GM12878 (cell line): ENCODE measurements at regions of chr3 and their contacts with region 1.

Region 1: GRCh38 chr3:16511681-16512434 is 1.6 kb downstream of the RFTN1 start:
- DNase-seq: peak; percentile 98
- ATAC-seq: peak; percentile 48
- H3K4me3 ChIP-seq: peak overlapping the region; percentile 86
- H3K27ac ChIP-seq: peak overlapping the region; percentile 92
- H3K4me1 ChIP-seq: peaks cover 37% of the 10 kb centered on the region
- H3K27me3 ChIP-seq: no peaks in the 10 kb centered on the region
- CTCF ChIP-seq: peak in 1 of 3 experiments; percentile 0; a peak in 1 of 6 replicates
- EP300 ChIP-seq: peak; percentile 99
- POLR2A ChIP-seq: peak; percentile 64
- RAD21 ChIP-seq: peak; percentile 8; the same call in 1 of the 2 replicates

Region 2: DNA sequence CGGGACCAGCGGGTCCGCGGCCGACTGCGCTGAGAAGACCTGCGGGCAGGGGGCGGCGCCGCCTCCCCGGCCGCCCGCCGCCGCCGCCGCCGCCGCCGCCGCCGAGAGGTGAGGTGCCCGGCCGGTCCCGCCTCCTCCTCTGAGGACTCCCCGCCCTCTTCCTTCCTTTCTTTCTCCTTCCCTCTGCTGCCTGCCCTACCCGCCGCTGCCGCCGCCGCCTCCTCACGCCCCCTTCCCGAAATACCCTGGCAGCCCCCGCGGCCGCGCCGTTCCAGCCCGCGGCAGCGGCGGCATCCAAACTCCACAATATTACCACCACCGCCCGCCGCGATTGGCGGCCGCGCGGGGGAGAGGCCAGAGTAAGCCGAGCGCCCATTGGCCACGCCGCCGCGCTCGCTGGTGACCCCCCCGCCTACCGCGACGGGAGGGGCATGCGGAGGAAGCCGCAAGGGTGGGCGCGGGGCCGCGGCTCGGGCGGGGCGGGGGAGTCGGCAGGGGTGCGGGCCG is 652.3 kb before region 1 on chr3:
- CTCF ChIA-PET with region 1: no interaction called
- POLR2A ChIA-PET with region 1: no interaction called
- RAD21 ChIA-PET with region 1: no interaction called
- SMC1A ChIA-PET with region 1: no interaction called
- in situ Hi-C with region 1: no loop called
- intact Hi-C with region 1: loop called (anchors 5 kb)
- DNase-seq: no peak
- ATAC-seq: peak; percentile 87
- H3K4me3 ChIP-seq: peak overlapping the region; percentile 86
- H3K27ac ChIP-seq: peak overlapping the region; percentile 78
- H3K4me1 ChIP-seq: 0 out of 2 replicates have a peak, but pooled peaks cover 3% of the 10 kb centered on the region
- H3K27me3 ChIP-seq: no peaks in the 10 kb centered on the region
- CTCF ChIP-seq: no peak
- EP300 ChIP-seq: no peak
- POLR2A ChIP-seq: peak; percentile 64
- RAD21 ChIP-seq: no peak

Region 3: GRCh38 chr3:16370872-16371740 is 140.8 kb before region 1 on chr3:
- CTCF ChIA-PET with region 1: interaction called, 7 read pairs
- POLR2A ChIA-PET with region 1: interaction called, 66 read pairs
- RAD21 ChIA-PET with region 1: interaction called, 52 read pairs
- SMC1A ChIA-PET with region 1: interaction called, 125 read pairs
- in situ Hi-C with region 1: loop called (anchors 5 kb)
- intact Hi-C with region 1: loop called (anchors 1 kb)
- DNase-seq: no peak
- ATAC-seq: peak; percentile 41
- H3K4me3 ChIP-seq: peak overlapping the region; percentile 23; the same call in 1 of the 2 replicates
- H3K27ac ChIP-seq: peak overlapping the region; percentile 96
- H3K4me1 ChIP-seq: peaks cover 62% of the 10 kb centered on the region
- H3K27me3 ChIP-seq: no peaks in the 10 kb centered on the region
- CTCF ChIP-seq: no peak
- EP300 ChIP-seq: peak in 1 of 2 experiments; percentile 67; a peak in 3 of 4 replicates
- POLR2A ChIP-seq: no peak
- RAD21 ChIP-seq: no peak

Region 4: GRCh38 chr3:16482770-16483531 is 28.9 kb before region 1 on chr3:
- CTCF ChIA-PET with region 1: interaction called, 11 read pairs
- POLR2A ChIA-PET with region 1: interaction called, 18 read pairs
- RAD21 ChIA-PET with region 1: interaction called, 15 read pairs
- SMC1A ChIA-PET with region 1: interaction called, 295 read pairs
- in situ Hi-C with region 1: no loop called
- intact Hi-C with region 1: no loop called
- DNase-seq: no peak
- ATAC-seq: peak; percentile 94
- H3K4me3 ChIP-seq: no peak overlapping the region
- H3K27ac ChIP-seq: peak overlapping the region; percentile 39; the same call in 1 of the 2 replicates
- H3K4me1 ChIP-seq: peaks cover 30% of the 10 kb centered on the region
- H3K27me3 ChIP-seq: no peaks in the 10 kb centered on the region
- CTCF ChIP-seq: no peak
- EP300 ChIP-seq: no peak
- POLR2A ChIP-seq: no peak
- RAD21 ChIP-seq: 0 out of 2 replicates have a peak, but pooled peaks have one; percentile 1

Region 5: GRCh38 chr3:16550676-16551341 is 39.0 kb after region 1 on chr3:
- CTCF ChIA-PET with region 1: interaction called, 16 read pairs
- POLR2A ChIA-PET with region 1: interaction called, 7 read pairs
- RAD21 ChIA-PET with region 1: interaction called, 29 read pairs
- SMC1A ChIA-PET with region 1: interaction called, 36 read pairs
- in situ Hi-C with region 1: no loop called
- intact Hi-C with region 1: loop called (anchors 1 kb)
- DNase-seq: peak; percentile 81
- ATAC-seq: peak; percentile 98
- H3K4me3 ChIP-seq: no peak overlapping the region
- H3K27ac ChIP-seq: 0 out of 2 replicates have a peak overlapping the region, but pooled peaks have one; percentile 9
- H3K4me1 ChIP-seq: peaks cover 13% of the 10 kb centered on the region
- H3K27me3 ChIP-seq: no peaks in the 10 kb centered on the region
- CTCF ChIP-seq: peak; percentile 83 to 94 (median 90)
- EP300 ChIP-seq: no peak
- POLR2A ChIP-seq: peak; percentile 25; the same call in 1 of the 2 replicates
- RAD21 ChIP-seq: peak; percentile 100

Region 6: GRCh38 chr3:16609932-16610580 is 98.2 kb after region 1 on chr3:
- CTCF ChIA-PET with region 1: no interaction called
- POLR2A ChIA-PET with region 1: no interaction called
- RAD21 ChIA-PET with region 1: no interaction called
- SMC1A ChIA-PET with region 1: no interaction called
- in situ Hi-C with region 1: no loop called
- intact Hi-C with region 1: no loop called
- DNase-seq: no peak
- ATAC-seq: no peak
- H3K4me3 ChIP-seq: no peak overlapping the region
- H3K27ac ChIP-seq: no peak overlapping the region
- H3K4me1 ChIP-seq: no peaks in the 10 kb centered on the region
- H3K27me3 ChIP-seq: no peaks in the 10 kb centered on the region
- CTCF ChIP-seq: no peak
- EP300 ChIP-seq: no peak
- POLR2A ChIP-seq: no peak
- RAD21 ChIP-seq: no peak

Region 7: DNA sequence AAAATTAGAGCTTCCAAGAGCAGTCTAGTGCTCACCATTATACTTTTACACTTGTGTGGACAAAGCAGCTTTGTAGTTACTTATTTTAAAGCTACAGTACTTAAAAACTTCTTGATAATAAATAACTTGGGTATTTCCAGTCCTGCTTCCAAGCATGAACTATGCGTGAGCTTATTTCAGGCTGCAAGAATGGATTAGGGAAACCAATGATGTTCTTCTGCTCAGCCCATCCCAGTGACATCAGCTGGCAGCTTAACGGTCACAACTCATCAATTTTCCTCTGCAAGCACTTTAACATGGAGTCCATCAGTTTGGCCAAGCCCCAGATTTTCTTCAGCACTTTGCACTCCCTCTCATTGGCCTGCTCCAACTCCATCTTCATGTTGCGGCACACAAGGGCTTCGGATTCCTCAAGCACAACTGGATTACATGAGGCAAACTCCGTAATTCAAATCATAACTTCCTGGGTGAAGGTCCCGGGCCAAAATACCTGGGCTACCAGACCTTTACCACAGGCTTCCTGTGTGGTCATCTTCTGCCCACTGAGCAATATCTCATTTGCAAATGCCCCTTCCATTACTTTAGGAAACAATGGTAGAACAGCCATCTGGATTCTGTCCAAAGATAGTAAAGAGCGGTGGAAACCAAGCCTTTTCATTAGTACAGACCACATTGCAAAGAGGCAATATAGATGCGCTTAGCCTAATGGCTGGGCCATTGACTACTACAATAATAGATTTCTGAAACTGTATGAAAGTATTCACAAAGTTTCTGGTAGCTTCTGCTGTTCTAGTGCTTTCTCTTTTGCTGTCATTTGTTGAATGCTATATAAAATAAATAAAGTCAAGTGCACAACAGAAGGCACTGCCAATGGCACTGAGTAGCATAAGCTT is 180.9 kb after region 1 on chr3:
- CTCF ChIA-PET with region 1: no interaction called
- POLR2A ChIA-PET with region 1: no interaction called
- RAD21 ChIA-PET with region 1: no interaction called
- SMC1A ChIA-PET with region 1: no interaction called
- in situ Hi-C with region 1: no loop called
- intact Hi-C with region 1: no loop called
- DNase-seq: no peak
- ATAC-seq: no peak
- H3K4me3 ChIP-seq: no peak overlapping the region
- H3K27ac ChIP-seq: no peak overlapping the region
- H3K4me1 ChIP-seq: peaks cover 12% of the 10 kb centered on the region; the same call in 1 of the 2 replicates
- H3K27me3 ChIP-seq: no peaks in the 10 kb centered on the region
- CTCF ChIP-seq: no peak
- EP300 ChIP-seq: no peak
- POLR2A ChIP-seq: no peak
- RAD21 ChIP-seq: no peak